Naive thymus-derived CD4-positive, alpha-beta T cell (primary cell): ENCODE measurements at regions of chr2 and their contacts with region 1.

Region 1: GRCh38 chr2:156589381-156590079 is 153.4 kb downstream of the GPD2 start:
- DNase-seq: peak in 6 of 9 donors; percentile 18 to 55 (median 42)
- ATAC-seq: peak; percentile 63
- H3K4me3 ChIP-seq: no peak overlapping the region
- H3K4me3 Mint-ChIP-seq: no peak overlapping the region
- H3K27ac ChIP-seq: no peak overlapping the region
- H3K27ac Mint-ChIP-seq: no peak overlapping the region
- H3K4me1 ChIP-seq: no peaks in the 10 kb centered on the region
- H3K4me1 Mint-ChIP-seq: peaks cover 0 to 9% (median 4%) of the 10 kb centered on the region in 7 donors
- H3K27me3 ChIP-seq: no peaks in the 10 kb centered on the region
- H3K27me3 Mint-ChIP-seq: no peaks in the 10 kb centered on the region

Region 2: DNA sequence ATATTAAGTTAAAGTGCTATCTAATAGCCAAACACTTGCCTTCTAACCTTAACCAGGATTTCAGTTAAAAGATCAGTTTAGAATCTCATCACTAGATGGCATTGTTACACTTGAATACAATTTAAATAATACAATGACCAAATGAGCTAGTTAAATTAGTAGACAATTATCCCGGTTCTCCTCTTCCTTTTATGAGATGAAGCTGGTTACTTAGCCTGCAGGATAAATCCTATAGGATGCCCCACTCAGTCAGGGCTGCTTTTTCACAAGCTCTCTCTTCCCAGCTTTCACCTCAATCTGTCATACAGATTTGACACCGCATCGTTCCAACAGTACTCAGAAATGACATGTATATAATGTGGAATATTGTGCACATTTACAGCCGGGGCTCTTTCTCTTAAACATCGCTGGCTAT is 1212.3 kb before region 1 on chr2:
- CTCF ChIA-PET with region 1: interaction called, 10 read pairs
- POLR2A ChIA-PET with region 1: no interaction called
- intact Hi-C with region 1: loop called (anchors 1 to 5 kb)
- DNase-seq: no peak
- ATAC-seq: no peak
- H3K4me3 ChIP-seq: no peak overlapping the region
- H3K4me3 Mint-ChIP-seq: no peak overlapping the region
- H3K27ac ChIP-seq: no peak overlapping the region
- H3K27ac Mint-ChIP-seq: no peak overlapping the region
- H3K4me1 ChIP-seq: no peaks in the 10 kb centered on the region
- H3K4me1 Mint-ChIP-seq: peaks cover 0 to 4% (median 0%) of the 10 kb centered on the region in 7 donors
- H3K27me3 ChIP-seq: peaks cover 0 to 3% of the 10 kb centered on the region in 2 donors
- H3K27me3 Mint-ChIP-seq: peaks cover 0 to 8% (median 6%) of the 10 kb centered on the region in 5 donors

Region 3: GRCh38 chr2:156065905-156066304 is 523.6 kb before region 1 on chr2:
- CTCF ChIA-PET with region 1: no interaction called
- POLR2A ChIA-PET with region 1: no interaction called
- intact Hi-C with region 1: loop called in 1 of 2 experiments (anchors 5 kb)
- DNase-seq: no peak
- ATAC-seq: no peak
- H3K4me3 ChIP-seq: no peak overlapping the region
- H3K4me3 Mint-ChIP-seq: no peak overlapping the region
- H3K27ac ChIP-seq: no peak overlapping the region
- H3K27ac Mint-ChIP-seq: no peak overlapping the region
- H3K4me1 ChIP-seq: no peaks in the 10 kb centered on the region
- H3K4me1 Mint-ChIP-seq: no peaks in the 10 kb centered on the region
- H3K27me3 ChIP-seq: no peaks in the 10 kb centered on the region
- H3K27me3 Mint-ChIP-seq: peaks cover 0 to 5% (median 0%) of the 10 kb centered on the region in 5 donors

Region 4: GRCh38 chr2:156192468-156192867 is 397.1 kb before region 1 on chr2:
- CTCF ChIA-PET with region 1: interaction called, 5 read pairs
- POLR2A ChIA-PET with region 1: no interaction called
- intact Hi-C with region 1: loop called (anchors 1 kb)
- DNase-seq: peak in 1 of 9 donors; percentile 3
- ATAC-seq: no peak
- H3K4me3 ChIP-seq: no peak overlapping the region
- H3K4me3 Mint-ChIP-seq: no peak overlapping the region
- H3K27ac ChIP-seq: no peak overlapping the region
- H3K27ac Mint-ChIP-seq: no peak overlapping the region
- H3K4me1 ChIP-seq: no peaks in the 10 kb centered on the region
- H3K4me1 Mint-ChIP-seq: no peaks in the 10 kb centered on the region
- H3K27me3 ChIP-seq: no peaks in the 10 kb centered on the region
- H3K27me3 Mint-ChIP-seq: no peaks in the 10 kb centered on the region

Region 5: DNA sequence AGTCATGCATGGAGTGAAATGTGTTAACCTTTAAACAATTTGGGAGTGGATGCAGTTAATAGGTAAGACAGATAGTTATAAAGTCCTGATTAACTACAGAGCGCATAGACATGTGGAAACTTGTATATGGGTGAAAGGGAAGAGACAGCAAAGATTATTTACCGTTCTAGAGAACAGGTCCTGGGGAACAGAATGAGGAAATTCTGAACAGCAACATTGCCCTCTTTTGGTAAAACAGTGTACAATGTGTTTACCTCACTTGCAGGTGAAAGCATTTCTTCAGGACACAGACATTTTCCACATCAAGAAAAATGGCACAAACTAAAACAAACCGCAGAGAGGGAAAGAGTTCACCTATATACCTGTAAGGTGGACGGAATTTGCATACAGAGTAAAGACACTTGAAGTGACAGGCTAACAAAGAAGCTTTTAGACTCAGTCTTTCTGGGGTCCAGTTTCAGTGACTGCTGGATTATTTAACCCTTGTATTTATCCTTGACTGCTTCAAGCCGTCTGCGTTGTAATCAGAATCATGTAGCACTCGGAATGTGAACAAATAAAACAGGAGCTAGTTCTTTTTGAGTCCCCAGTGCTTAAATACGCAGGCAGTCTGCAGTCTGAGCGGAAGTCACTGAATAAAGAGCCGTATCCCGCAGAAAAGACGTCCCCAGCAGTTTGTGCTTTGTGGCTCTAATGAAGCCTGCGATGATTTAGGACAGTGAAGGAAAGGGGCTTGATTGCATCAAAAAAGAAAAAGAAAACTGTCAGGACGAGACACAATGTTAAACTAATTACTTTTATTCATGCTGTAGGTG is 303.1 kb after region 1 on chr2:
- CTCF ChIA-PET with region 1: no interaction called
- POLR2A ChIA-PET with region 1: no interaction called
- intact Hi-C with region 1: loop called in 1 of 2 experiments (anchors 10 kb)
- DNase-seq: peak in 2 of 9 donors; percentile 1 to 8
- ATAC-seq: peak; percentile 40
- H3K4me3 ChIP-seq: no peak overlapping the region
- H3K4me3 Mint-ChIP-seq: peak overlapping the region in 6 of 10 donors; percentile 1 to 36 (median 22)
- H3K27ac ChIP-seq: no peak overlapping the region
- H3K27ac Mint-ChIP-seq: no peak overlapping the region
- H3K4me1 ChIP-seq: no peaks in the 10 kb centered on the region
- H3K4me1 Mint-ChIP-seq: peaks cover 5 to 32% (median 10%) of the 10 kb centered on the region in 7 donors
- H3K27me3 ChIP-seq: peaks cover 0 to 6% of the 10 kb centered on the region in 2 donors
- H3K27me3 Mint-ChIP-seq: peaks cover 36 to 67% (median 45%) of the 10 kb centered on the region in 5 donors